CD4-positive, alpha-beta T cell (primary cell): ENCODE measurements at regions of chr3 and their contacts with region 1.

Region 1: DNA sequence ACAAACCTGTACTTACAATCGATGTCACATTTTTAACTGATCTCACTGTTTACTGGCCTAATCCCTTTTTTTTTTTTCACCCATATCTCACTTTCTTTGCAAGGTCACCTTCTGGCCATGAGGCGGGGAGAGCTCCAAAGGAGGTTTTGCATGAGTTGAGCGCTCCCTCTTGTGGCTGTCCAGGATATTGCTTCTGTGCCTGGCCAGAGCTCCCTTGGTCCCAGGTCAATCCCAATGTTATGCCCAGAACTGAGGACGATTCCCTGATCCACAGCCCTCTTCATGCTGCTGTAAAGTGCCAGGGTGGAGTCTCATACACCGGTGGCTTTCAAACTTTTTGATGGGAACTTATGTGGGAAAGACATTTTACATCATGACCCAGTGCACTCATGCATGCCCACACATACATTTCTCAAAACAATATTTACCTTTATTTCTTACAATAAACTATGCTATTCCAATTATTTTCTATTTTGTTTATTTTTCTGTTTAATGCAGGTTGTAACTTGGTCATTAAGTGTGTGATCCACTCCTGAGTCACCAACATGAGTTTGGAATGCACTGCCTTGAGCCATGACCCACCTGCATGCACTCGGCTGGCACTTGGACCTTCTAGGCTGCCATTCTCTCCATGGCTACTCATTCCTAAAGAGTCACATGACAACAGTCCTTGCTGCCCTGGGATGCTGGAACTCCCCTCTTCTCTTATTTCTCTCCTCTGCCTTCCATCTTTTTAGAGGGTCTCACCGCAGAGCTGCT is 9.6 kb upstream of the SST start:
- DNase-seq: peak; percentile 39 to 76 (median 56)
- ATAC-seq: no peak
- H3K4me3 ChIP-seq: no peak overlapping the region
- H3K4me3 Mint-ChIP-seq: no peak overlapping the region
- H3K27ac ChIP-seq: no peak overlapping the region
- H3K27ac Mint-ChIP-seq: no peak overlapping the region
- H3K4me1 ChIP-seq: no peaks in the 10 kb centered on the region
- H3K4me1 Mint-ChIP-seq: no peaks in the 10 kb centered on the region
- H3K27me3 ChIP-seq: peaks cover 5 to 6% of the 10 kb centered on the region in 2 experiments
- H3K27me3 Mint-ChIP-seq: peaks cover 62% of the 10 kb centered on the region
- CTCF ChIP-seq: peak; percentile 94

Region 2: GRCh38 chr3:187223799-187224198 is 456.0 kb before region 1 on chr3:
- CTCF ChIA-PET with region 1: interaction called, 4 read pairs
- POLR2A ChIA-PET with region 1: no interaction called
- intact Hi-C with region 1: loop called (anchors 1 to 2 kb)
- DNase-seq: no peak
- ATAC-seq: no peak
- H3K4me3 ChIP-seq: no peak overlapping the region
- H3K4me3 Mint-ChIP-seq: no peak overlapping the region
- H3K27ac ChIP-seq: no peak overlapping the region
- H3K27ac Mint-ChIP-seq: no peak overlapping the region
- H3K4me1 ChIP-seq: no peaks in the 10 kb centered on the region
- H3K4me1 Mint-ChIP-seq: no peaks in the 10 kb centered on the region
- H3K27me3 ChIP-seq: peaks cover 0 to 6% of the 10 kb centered on the region in 2 experiments
- H3K27me3 Mint-ChIP-seq: peaks cover 5% of the 10 kb centered on the region
- CTCF ChIP-seq: no peak

Region 3: GRCh38 chr3:187319699-187320302 is 360.0 kb before region 1 on chr3:
- CTCF ChIA-PET with region 1: interaction called, 75 read pairs
- POLR2A ChIA-PET with region 1: interaction called, 11 read pairs
- intact Hi-C with region 1: loop called (anchors 1 kb)
- DNase-seq: peak; percentile 16 to 71 (median 38)
- ATAC-seq: peak; percentile 77
- H3K4me3 ChIP-seq: no peak overlapping the region
- H3K4me3 Mint-ChIP-seq: no peak overlapping the region
- H3K27ac ChIP-seq: no peak overlapping the region
- H3K27ac Mint-ChIP-seq: no peak overlapping the region
- H3K4me1 ChIP-seq: peaks cover 14% of the 10 kb centered on the region
- H3K4me1 Mint-ChIP-seq: peaks cover 15% of the 10 kb centered on the region
- H3K27me3 ChIP-seq: peaks cover 13 to 15% of the 10 kb centered on the region in 2 experiments
- H3K27me3 Mint-ChIP-seq: peaks cover 63% of the 10 kb centered on the region
- CTCF ChIP-seq: no peak